CD4-positive, alpha-beta T cell (primary cell): ENCODE measurements at regions of chr17 and their contacts with region 1.

Region 1: GRCh38 chr17:48593840-48594537 is 410 bp upstream of the HOXB5 start:
- DNase-seq: peak; percentile 61 to 91 (median 82)
- ATAC-seq: peak; percentile 74
- H3K4me3 ChIP-seq: peak overlapping the region; percentile 45
- H3K4me3 Mint-ChIP-seq: peak overlapping the region; percentile 74
- H3K27ac ChIP-seq: no peak overlapping the region
- H3K27ac Mint-ChIP-seq: no peak overlapping the region
- H3K4me1 ChIP-seq: peaks cover 53% of the 10 kb centered on the region
- H3K4me1 Mint-ChIP-seq: peaks cover 46% of the 10 kb centered on the region
- H3K27me3 ChIP-seq: peaks cover 83 to 94% of the 10 kb centered on the region in 2 experiments
- H3K27me3 Mint-ChIP-seq: peaks cover 98% of the 10 kb centered on the region
- CTCF ChIP-seq: peak; percentile 83

Region 2: DNA sequence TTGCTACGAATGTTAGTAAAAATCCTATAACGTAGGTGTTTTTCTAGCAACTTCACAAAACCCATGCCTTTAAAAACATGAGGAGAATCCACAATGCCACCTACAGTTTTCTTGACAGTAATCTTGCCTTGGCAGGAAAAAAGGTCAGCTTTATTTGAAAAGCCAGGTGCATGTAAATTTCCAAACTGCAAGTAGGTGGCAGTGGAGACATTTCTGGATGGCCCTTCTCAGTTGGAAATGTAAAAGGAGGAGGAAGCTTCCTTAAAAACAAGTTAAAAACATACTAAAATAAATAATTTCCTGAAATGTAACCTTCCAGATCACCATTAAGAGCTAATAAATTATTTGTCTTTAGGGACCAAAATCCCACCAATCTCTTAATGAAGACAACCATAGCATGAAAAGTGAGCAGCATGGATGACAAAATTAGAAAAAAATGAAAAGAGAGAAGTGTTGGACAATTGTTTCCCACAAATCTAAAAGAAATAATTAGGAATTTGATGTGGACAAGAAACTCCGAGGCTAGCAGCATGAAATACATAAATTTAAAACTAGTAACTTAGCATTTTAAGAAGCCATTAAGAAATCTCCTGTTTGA is 334.2 kb before region 1 on chr17:
- CTCF ChIA-PET with region 1: no interaction called
- POLR2A ChIA-PET with region 1: interaction called, 5 read pairs
- intact Hi-C with region 1: loop called (anchors 1 to 5 kb)
- DNase-seq: peak in 3 of 14 experiments; percentile 13 to 22 (median 21)
- ATAC-seq: no peak
- H3K4me3 ChIP-seq: no peak overlapping the region
- H3K4me3 Mint-ChIP-seq: no peak overlapping the region
- H3K27ac ChIP-seq: no peak overlapping the region
- H3K27ac Mint-ChIP-seq: no peak overlapping the region
- H3K4me1 ChIP-seq: no peaks in the 10 kb centered on the region
- H3K4me1 Mint-ChIP-seq: peaks cover 15% of the 10 kb centered on the region
- H3K27me3 ChIP-seq: no peaks in the 10 kb centered on the region
- H3K27me3 Mint-ChIP-seq: no peaks in the 10 kb centered on the region
- CTCF ChIP-seq: peak; percentile 42

Region 3: DNA sequence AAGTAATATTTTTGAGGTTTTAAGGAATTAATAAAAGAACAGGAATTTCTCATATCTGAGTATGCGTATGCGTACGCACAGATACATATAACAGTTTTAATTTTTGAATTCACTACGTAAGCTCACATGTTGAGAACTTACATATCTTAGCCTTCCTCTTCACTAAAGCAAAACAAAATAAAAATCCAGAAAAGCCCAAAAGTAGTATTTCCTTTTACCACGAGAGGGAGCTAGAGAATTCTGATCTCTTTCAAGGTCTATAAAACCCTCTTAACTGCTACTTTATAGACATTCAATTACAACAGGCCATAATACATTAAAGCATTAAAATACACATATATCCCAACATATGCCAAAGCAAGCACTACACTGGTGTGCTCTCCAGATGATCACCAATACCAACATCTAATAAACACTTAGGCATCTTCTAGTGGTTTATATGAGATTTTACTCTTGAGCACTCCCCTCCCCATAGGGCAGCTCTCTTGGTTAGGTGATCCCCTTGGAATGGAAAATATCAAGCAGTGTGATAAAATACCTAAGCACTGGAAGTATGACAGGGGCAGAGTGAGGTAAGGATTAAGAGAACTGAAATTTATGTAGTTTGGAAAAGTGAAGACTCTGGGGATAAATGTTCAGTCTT is 258.0 kb before region 1 on chr17:
- CTCF ChIA-PET with region 1: interaction called, 23 read pairs
- POLR2A ChIA-PET with region 1: interaction called, 5 read pairs
- intact Hi-C with region 1: loop called (anchors 1 to 2 kb)
- DNase-seq: peak in 3 of 14 experiments; percentile 74 to 79 (median 76)
- ATAC-seq: peak; percentile 66
- H3K4me3 ChIP-seq: no peak overlapping the region
- H3K4me3 Mint-ChIP-seq: no peak overlapping the region
- H3K27ac ChIP-seq: no peak overlapping the region
- H3K27ac Mint-ChIP-seq: no peak overlapping the region
- H3K4me1 ChIP-seq: no peaks in the 10 kb centered on the region
- H3K4me1 Mint-ChIP-seq: peaks cover 6% of the 10 kb centered on the region
- H3K27me3 ChIP-seq: no peaks in the 10 kb centered on the region
- H3K27me3 Mint-ChIP-seq: no peaks in the 10 kb centered on the region
- CTCF ChIP-seq: peak; percentile 85

Region 4: DNA sequence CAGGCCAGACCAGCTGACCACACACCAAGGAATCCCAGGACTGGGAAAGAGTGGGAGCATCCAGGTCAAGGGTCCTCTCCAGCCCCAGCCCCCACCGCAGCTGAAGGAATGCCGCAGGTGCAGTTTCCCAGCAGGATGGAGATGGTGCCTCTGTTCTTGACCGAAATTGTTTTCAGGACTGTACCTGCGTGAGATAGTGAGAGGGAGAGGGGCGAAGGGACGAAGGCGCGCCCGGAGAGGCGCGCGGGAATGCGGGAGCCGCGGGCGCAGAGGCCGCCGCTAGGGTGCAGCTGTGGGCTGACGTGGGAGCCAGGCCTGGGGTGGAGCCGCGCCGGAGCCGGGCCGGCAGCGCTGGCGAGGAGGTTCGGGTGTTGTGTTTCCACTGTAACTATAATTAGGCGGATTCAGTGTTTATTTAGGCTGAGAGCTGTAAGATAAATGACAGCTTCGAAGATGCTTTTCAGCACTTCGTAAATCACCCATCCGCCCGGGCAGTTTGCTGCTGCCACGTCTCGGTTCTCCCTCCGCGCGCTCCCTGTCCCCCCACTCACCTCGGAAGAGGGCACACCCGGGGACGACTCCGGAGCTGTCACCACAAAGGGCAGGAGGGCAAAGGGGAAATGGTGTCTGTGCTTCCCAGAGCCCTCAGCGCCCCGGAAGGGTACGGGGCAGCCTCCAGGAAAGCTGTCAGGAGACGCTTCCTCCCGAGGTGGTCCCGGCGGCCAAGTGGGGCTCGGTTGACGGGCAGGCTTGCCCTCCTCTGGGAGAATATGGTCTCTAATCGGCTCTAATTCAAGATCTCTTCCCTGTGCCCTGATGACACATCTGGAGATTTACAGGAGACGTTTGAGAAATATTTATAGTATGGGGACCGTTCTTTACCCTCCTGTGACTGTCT is 101.3 kb before region 1 on chr17:
- CTCF ChIA-PET with region 1: interaction called, 13 read pairs
- POLR2A ChIA-PET with region 1: no interaction called
- intact Hi-C with region 1: loop called (anchors 2 to 5 kb)
- DNase-seq: peak; percentile 28 to 85 (median 66)
- ATAC-seq: peak; percentile 97
- H3K4me3 ChIP-seq: peak overlapping the region; percentile 59
- H3K4me3 Mint-ChIP-seq: peak overlapping the region; percentile 9
- H3K27ac ChIP-seq: no peak overlapping the region
- H3K27ac Mint-ChIP-seq: no peak overlapping the region
- H3K4me1 ChIP-seq: peaks cover 21% of the 10 kb centered on the region
- H3K4me1 Mint-ChIP-seq: peaks cover 3% of the 10 kb centered on the region
- H3K27me3 ChIP-seq: peaks cover 7 to 12% of the 10 kb centered on the region in 2 experiments
- H3K27me3 Mint-ChIP-seq: peaks cover 31% of the 10 kb centered on the region
- CTCF ChIP-seq: peak; percentile 86